ENCODE measurements at regions of chr6 and their contacts with region 1.

Region 1: GRCh38 chr6:28824793-28825731 is 98.7 kb downstream of the TRIM27 start:
- DNase-seq: no peak
- ATAC-seq: no peak
- H3K4me3 ChIP-seq: no peak overlapping the region
- H3K4me3 Mint-ChIP-seq: peak overlapping the region in 1 of 3 donors; percentile 23
- H3K27ac ChIP-seq: no peak overlapping the region
- H3K27ac Mint-ChIP-seq: no peak overlapping the region
- H3K4me1 ChIP-seq: peaks cover 0 to 10% of the 10 kb centered on the region in 2 experiments
- H3K4me1 Mint-ChIP-seq: peaks cover 8 to 13% (median 11%) of the 10 kb centered on the region in 3 donors
- H3K27me3 ChIP-seq: peaks cover 28 to 54% of the 10 kb centered on the region in 2 experiments
- H3K27me3 Mint-ChIP-seq: peaks cover 78 to 80% of the 10 kb centered on the region in 2 donors

Region 2: GRCh38 chr6:28948782-28949498 is 123.9 kb after region 1 on chr6:
- CTCF ChIA-PET with region 1: no interaction called
- POLR2A ChIA-PET with region 1: interaction called in 1 of 2 experiments, 15 read pairs
- DNase-seq: no peak
- ATAC-seq: no peak
- H3K4me3 ChIP-seq: no peak overlapping the region
- H3K4me3 Mint-ChIP-seq: no peak overlapping the region
- H3K27ac ChIP-seq: no peak overlapping the region
- H3K27ac Mint-ChIP-seq: no peak overlapping the region
- H3K4me1 ChIP-seq: peaks cover 0 to 11% of the 10 kb centered on the region in 2 experiments
- H3K4me1 Mint-ChIP-seq: peaks cover 14 to 23% (median 16%) of the 10 kb centered on the region in 3 donors
- H3K27me3 ChIP-seq: peaks cover 0 to 2% of the 10 kb centered on the region in 2 experiments
- H3K27me3 Mint-ChIP-seq: peaks cover 0 to 4% of the 10 kb centered on the region in 2 donors

Measured in T-cell (primary cell).